Activated CD8-positive, alpha-beta memory T cell treated with anti-CD3 and anti-CD28 coated beads, Interleukin-2, amount 10 ng/mL, durations not matched to agents 7 days and 5 days (primary cell): ENCODE measurements at regions of chr19 and their contacts with region 1.

Region 1: GRCh38 chr19:38402967-38403861 is at the start of gene FAM98C:
- DNase-seq: peak; percentile 98
- ATAC-seq: peak; percentile 98
- H3K4me3 Mint-ChIP-seq: peak within 1 kb of the TSS; percentile 77
- H3K27ac Mint-ChIP-seq: peak within 1 kb of the TSS; percentile 90
- H3K4me1 Mint-ChIP-seq: peaks cover 13% of the 10 kb centered on the region
- H3K27me3 Mint-ChIP-seq: peaks cover 8% of the 10 kb centered on the region
- total RNA-seq, gene FAM98C: 22.4 to 24.1 TPM

Region 2: GRCh38 chr19:38277969-38278680 is 125.1 kb before region 1 on chr19:
- CTCF ChIA-PET with region 1: no interaction called
- DNase-seq: no peak
- ATAC-seq: no peak
- H3K4me3 Mint-ChIP-seq: no peak overlapping the region
- H3K27ac Mint-ChIP-seq: no peak overlapping the region
- H3K4me1 Mint-ChIP-seq: peaks cover 11% of the 10 kb centered on the region
- H3K27me3 Mint-ChIP-seq: no peaks in the 10 kb centered on the region

Region 3: DNA sequence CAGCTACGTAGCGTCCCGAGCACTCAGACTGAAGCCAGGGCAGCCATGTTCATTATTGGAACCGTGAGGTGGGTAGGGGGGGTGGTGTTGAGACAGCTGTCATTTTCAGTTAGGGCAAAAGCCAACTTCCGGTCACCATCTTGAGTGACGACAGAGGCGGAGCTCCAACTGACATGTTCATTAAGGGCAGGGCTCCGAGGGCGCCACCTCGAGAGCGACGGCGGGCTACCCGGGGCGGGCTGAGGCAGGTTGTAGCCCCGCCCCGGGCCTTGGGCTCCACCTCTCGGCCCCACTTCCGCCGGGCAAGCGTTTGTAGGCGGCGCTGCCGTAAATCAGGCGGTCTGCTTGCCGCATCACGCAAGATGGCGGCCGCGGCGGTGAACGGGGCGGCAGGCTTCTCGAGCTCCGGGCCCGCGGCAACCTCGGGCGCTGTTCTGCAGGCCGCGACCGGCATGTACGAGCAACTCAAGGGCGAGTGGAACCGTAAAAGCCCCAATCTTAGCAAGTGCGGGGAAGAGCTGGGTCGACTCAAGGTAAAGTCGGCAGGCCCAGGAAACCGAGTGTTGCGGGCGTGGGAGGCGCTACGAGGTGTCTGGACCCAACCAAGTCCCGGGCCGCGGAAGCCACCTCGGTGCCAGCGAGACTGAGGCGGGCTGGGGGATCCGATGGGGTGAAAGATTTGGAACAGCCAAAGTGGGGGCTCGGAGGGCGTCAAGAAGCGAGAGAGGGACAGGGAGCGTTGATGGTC is 28.6 kb before region 1 on chr19 and contains the start of gene PSMD8:
- CTCF ChIA-PET with region 1: interaction called, 21 read pairs
- DNase-seq: peak; percentile 100
- ATAC-seq: peak; percentile 99
- H3K4me3 Mint-ChIP-seq: peak within 1 kb of the TSS; percentile 98
- H3K27ac Mint-ChIP-seq: peak within 1 kb of the TSS; percentile 98
- H3K4me1 Mint-ChIP-seq: peaks cover 22% of the 10 kb centered on the region
- H3K27me3 Mint-ChIP-seq: peaks cover 4% of the 10 kb centered on the region
- total RNA-seq, gene PSMD8: 164 to 204 TPM

Region 4: DNA sequence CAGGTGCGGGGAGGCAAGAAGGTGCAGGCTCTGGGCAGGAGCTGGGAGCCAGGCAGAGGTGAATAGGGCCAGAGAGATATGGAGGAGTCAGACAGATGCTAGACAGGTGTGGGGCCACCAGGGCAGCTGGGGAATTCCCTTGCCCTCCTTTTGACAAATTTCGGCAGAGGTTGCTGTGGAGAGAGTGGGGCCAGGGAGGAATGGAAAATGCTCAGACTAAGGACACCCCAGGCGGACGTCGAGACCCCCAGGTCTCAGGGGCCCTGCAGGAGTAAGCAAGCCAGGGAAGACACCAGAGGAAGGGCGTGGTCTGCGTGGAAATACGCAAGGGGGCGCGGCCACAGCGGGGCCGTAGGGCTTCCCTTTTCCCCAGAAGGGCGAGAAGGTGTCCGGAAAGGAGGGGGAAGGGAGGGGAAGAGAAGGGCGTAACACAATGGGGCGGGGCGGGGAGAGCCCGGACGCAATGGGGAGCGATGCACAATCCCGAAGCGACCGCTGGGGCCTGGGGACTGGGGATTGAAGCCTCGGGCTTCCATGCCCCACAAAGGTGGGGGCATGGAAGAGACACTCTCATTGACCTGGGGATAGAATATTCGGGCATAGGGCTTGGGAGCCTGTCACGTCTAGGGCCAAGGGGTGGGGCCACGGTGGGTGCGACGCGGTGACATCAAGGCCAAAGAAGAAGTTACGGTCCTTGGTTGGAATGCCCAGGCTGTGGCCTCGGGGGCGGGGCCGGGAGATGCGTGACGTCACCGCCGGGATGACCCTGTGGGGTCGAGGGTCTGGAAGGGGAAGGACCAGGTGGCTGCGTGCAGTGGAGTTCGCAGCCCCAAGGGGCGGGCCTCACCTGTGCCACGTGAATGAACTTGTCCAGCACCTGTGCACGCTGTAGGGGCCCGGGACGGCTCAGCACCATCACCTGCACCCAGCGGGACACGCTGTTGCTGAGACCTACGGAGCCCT is 14.6 kb after region 1 on chr19:
- CTCF ChIA-PET with region 1: interaction called, 27 read pairs
- DNase-seq: peak; percentile 82
- ATAC-seq: peak; percentile 92
- H3K4me3 Mint-ChIP-seq: peak overlapping the region; percentile 77
- H3K27ac Mint-ChIP-seq: peak overlapping the region; percentile 66
- H3K4me1 Mint-ChIP-seq: peaks cover 13% of the 10 kb centered on the region
- H3K27me3 Mint-ChIP-seq: no peaks in the 10 kb centered on the region

Region 5: DNA sequence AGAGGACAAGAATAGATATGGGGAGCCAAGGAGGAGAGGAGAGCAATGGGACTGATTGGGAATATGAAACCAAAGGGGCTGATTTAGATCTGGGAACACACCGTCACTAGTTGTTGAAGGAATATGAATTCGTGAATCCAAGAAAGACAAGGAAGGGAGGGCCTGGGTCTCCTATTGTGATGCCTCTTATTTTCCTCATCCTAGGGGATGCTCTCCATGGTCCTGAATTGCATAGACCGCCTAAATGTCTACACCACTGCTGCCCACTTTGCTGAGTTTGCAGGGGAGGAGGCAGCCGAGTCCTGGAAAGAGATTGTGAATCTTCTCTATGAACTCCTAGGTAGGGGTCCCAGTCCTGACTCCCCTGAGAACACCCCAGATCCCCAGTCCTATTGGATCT is 51.8 kb after region 1 on chr19:
- CTCF ChIA-PET with region 1: no interaction called
- DNase-seq: no peak
- ATAC-seq: no peak
- H3K4me3 Mint-ChIP-seq: no peak overlapping the region
- H3K27ac Mint-ChIP-seq: no peak overlapping the region
- H3K4me1 Mint-ChIP-seq: no peaks in the 10 kb centered on the region
- H3K27me3 Mint-ChIP-seq: no peaks in the 10 kb centered on the region

Region 6: GRCh38 chr19:38514812-38515633 is 111.8 kb after region 1 on chr19:
- CTCF ChIA-PET with region 1: interaction called, 44 read pairs
- DNase-seq: peak; percentile 81
- ATAC-seq: peak; percentile 84
- H3K4me3 Mint-ChIP-seq: no peak overlapping the region
- H3K27ac Mint-ChIP-seq: peak overlapping the region; percentile 15
- H3K4me1 Mint-ChIP-seq: peaks cover 29% of the 10 kb centered on the region
- H3K27me3 Mint-ChIP-seq: peaks cover 21% of the 10 kb centered on the region

Region 7: GRCh38 chr19:38618590-38619360 is 215.6 kb after region 1 on chr19 and contains the start of gene EIF3K:
- CTCF ChIA-PET with region 1: interaction called, 14 read pairs
- DNase-seq: peak; percentile 99
- ATAC-seq: peak; percentile 74
- H3K4me3 Mint-ChIP-seq: peak within 1 kb of the TSS; percentile 96
- H3K27ac Mint-ChIP-seq: peak within 1 kb of the TSS; percentile 89
- H3K4me1 Mint-ChIP-seq: peaks cover 48% of the 10 kb centered on the region
- H3K27me3 Mint-ChIP-seq: no peaks in the 10 kb centered on the region
- total RNA-seq, gene EIF3K: 281 to 308 TPM

Region 8: GRCh38 chr19:38891771-38892170 is 488.6 kb after region 1 on chr19:
- CTCF ChIA-PET with region 1: interaction called, 15 read pairs
- DNase-seq: no peak
- ATAC-seq: no peak
- H3K4me3 Mint-ChIP-seq: no peak overlapping the region
- H3K27ac Mint-ChIP-seq: no peak overlapping the region
- H3K4me1 Mint-ChIP-seq: no peaks in the 10 kb centered on the region
- H3K27me3 Mint-ChIP-seq: no peaks in the 10 kb centered on the region

Region 9: GRCh38 chr19:38952395-38953165 is 549.4 kb after region 1 on chr19:
- CTCF ChIA-PET with region 1: interaction called, 10 read pairs
- DNase-seq: peak; percentile 65
- ATAC-seq: peak; percentile 48
- H3K4me3 Mint-ChIP-seq: no peak overlapping the region
- H3K27ac Mint-ChIP-seq: no peak overlapping the region
- H3K4me1 Mint-ChIP-seq: peaks cover 18% of the 10 kb centered on the region
- H3K27me3 Mint-ChIP-seq: peaks cover 35% of the 10 kb centered on the region